H1 (cell line): ENCODE measurements at regions of chr2 and their contacts with region 1.

Region 1: GRCh38 chr2:161004379-161004778 is 155.8 kb upstream of the TANK start:
- DNase-seq: no peak
- H3K4me3 ChIP-seq: no peak overlapping the region
- H3K27ac ChIP-seq: no peak overlapping the region
- H3K4me1 ChIP-seq: no peaks in the 10 kb centered on the region
- H3K27me3 ChIP-seq: no peaks in the 10 kb centered on the region
- CTCF ChIP-seq: peak in 2 of 3 experiments; percentile 13 to 38; a peak in 2 of 4 replicates
- EP300 ChIP-seq: no peak
- POLR2A ChIP-seq: no peak
- RAD21 ChIP-seq: peak; percentile 44 to 49; a peak in 3 of 4 replicates

Region 2: DNA sequence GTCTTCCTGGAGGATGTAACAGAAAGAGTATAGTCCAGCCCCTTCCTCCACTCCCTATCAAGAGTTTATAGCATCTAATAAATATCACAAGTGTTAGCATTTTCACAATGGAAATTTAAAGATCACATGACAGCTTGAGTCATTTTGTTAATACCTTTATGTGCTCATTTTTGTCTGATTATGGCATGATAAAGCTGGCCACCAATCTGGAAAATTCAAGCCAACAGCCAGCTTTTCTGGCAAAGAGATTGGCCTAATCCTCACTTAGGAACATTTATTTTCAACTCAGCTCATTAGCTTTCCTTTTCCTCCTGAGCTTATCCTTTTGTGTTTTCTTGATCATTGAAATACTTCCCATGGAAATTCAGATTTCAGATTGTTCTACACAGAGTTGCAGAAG is 247.9 kb before region 1 on chr2:
- CTCF ChIA-PET with region 1: no interaction called
- POLR2A ChIA-PET with region 1: no interaction called
- DNase-seq: no peak
- H3K4me3 ChIP-seq: no peak overlapping the region
- H3K27ac ChIP-seq: no peak overlapping the region
- H3K4me1 ChIP-seq: peaks cover 0 to 3% (median 0%) of the 10 kb centered on the region in 4 experiments; a peak in 1 of 7 replicates
- H3K27me3 ChIP-seq: no peaks in the 10 kb centered on the region
- CTCF ChIP-seq: no peak
- EP300 ChIP-seq: no peak
- POLR2A ChIP-seq: no peak
- RAD21 ChIP-seq: no peak

Region 3: GRCh38 chr2:160940699-160941098 is 63.7 kb before region 1 on chr2:
- CTCF ChIA-PET with region 1: no interaction called
- POLR2A ChIA-PET with region 1: no interaction called
- DNase-seq: no peak
- H3K4me3 ChIP-seq: no peak overlapping the region
- H3K27ac ChIP-seq: no peak overlapping the region
- H3K4me1 ChIP-seq: peaks cover 4 to 8% (median 6%) of the 10 kb centered on the region in 4 experiments; a peak in 6 of 7 replicates
- H3K27me3 ChIP-seq: no peaks in the 10 kb centered on the region
- CTCF ChIP-seq: no peak
- EP300 ChIP-seq: no peak
- POLR2A ChIP-seq: no peak
- RAD21 ChIP-seq: no peak

Region 4: DNA sequence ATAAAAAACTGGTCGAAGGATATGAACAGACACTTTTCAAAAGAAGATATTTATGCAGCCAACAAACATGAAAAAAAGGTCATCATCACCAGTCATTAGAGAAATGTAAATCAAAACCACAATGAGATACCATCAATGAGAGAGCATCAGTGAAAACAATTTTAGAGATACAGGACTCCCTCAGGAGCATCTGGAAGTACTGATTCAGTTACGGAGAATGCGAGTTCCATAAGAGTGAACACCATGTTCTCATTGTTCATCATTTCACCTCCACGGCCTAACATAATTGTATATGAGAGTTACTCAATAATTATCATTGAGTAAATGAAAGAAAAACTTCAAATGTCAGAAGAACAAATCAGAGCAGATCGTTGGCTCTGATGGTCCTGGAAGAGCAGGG is 14.9 kb after region 1 on chr2:
- CTCF ChIA-PET with region 1: interaction called, 14 read pairs
- POLR2A ChIA-PET with region 1: no interaction called
- DNase-seq: no peak
- H3K4me3 ChIP-seq: no peak overlapping the region
- H3K27ac ChIP-seq: no peak overlapping the region
- H3K4me1 ChIP-seq: no peaks in the 10 kb centered on the region
- H3K27me3 ChIP-seq: peaks cover 0 to 1% (median 0%) of the 10 kb centered on the region in 4 experiments; a peak in 1 of 7 replicates
- CTCF ChIP-seq: no peak
- EP300 ChIP-seq: no peak
- POLR2A ChIP-seq: no peak
- RAD21 ChIP-seq: no peak

Region 5: DNA sequence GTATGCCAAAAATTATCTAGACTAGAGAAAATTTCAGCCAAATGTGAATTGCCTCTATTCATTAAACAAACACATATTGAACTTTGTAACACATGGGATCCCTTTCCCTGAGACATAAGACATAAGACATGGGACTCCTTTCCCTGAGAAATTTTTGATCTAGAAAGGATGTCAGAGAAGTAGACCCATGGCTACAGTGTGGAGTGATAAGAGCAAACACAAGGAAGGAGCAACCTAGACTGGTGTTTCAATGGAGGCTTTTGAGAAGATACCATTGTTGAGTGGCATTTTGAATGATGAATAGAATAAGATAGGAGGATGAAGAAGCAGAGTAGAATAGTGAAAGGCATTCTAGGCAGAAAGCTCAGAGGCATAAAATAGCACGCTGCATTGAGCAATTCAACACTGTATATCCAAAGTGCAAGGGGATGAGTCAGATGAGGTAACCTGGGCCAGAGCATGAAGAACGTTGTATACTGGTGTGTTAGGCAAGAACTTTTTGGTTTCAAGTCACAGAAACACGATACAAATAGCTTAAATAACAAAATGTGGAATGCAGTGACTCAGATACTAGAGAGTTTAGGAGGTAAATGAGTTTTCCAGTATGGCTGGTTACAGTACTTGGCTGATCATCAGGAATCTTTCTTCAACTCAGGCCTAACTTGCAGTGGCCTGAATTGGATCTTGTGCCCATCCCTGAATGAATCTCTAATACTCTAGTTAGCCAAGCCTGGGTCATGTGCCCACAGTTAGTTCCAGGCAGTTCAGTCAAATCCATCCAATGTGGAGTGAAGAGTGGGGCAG is 26.1 kb after region 1 on chr2:
- CTCF ChIA-PET with region 1: interaction called, 13 read pairs
- POLR2A ChIA-PET with region 1: no interaction called
- DNase-seq: no peak
- H3K4me3 ChIP-seq: no peak overlapping the region
- H3K27ac ChIP-seq: no peak overlapping the region
- H3K4me1 ChIP-seq: no peaks in the 10 kb centered on the region
- H3K27me3 ChIP-seq: peaks cover 0 to 2% (median 0%) of the 10 kb centered on the region in 4 experiments; a peak in 1 of 7 replicates
- CTCF ChIP-seq: no peak
- EP300 ChIP-seq: no peak
- POLR2A ChIP-seq: no peak
- RAD21 ChIP-seq: no peak

Region 6: DNA sequence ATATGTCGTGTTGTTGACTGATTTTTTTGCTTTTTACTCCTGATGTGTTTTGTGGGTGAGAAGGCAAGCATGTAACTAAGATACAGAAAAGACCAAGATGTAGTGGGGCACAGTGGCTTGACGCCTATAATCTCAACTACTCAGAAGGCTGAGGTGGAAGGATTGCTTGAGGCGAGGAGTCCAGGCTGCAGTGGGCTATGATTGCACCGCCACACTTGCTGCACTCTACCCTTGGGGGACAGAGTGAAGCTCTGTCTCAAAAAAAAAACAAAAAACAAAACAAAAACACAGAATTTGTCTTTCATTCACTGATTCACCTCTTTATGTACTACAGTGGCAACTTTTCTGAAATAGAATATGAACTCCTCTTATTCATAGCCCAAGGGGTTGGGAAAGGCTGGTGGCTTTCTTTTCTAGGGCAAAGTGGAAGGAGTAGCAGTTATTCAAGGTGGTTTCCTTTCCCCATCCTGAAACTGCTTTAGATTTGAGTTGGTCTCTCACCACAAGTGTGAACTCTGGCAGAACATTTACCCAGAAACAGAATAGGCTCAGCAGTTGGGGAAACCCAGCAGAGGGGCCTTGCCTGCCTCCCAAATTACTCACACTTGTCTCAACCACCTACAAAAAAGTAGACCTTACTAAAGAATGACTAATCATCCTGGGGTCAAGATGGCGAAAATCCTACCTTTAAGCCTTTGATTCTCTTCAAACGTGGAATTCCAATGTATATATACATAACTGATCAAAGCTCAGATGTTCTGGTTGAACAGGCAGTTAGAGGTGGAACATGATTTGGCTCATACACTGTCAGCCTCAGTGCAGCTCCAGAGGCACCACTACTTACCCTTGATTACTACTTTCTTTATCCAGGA is 162.4 kb after region 1 on chr2:
- CTCF ChIA-PET with region 1: no interaction called
- POLR2A ChIA-PET with region 1: no interaction called
- DNase-seq: no peak
- H3K4me3 ChIP-seq: no peak overlapping the region
- H3K27ac ChIP-seq: no peak overlapping the region
- H3K4me1 ChIP-seq: 0 out of 7 replicates have a peak, but pooled peaks cover 0 to 2% (median 0%) of the 10 kb centered on the region in 4 experiments
- H3K27me3 ChIP-seq: no peaks in the 10 kb centered on the region
- CTCF ChIP-seq: no peak
- EP300 ChIP-seq: no peak
- POLR2A ChIP-seq: no peak
- RAD21 ChIP-seq: no peak